ENCODE measurements at regions of chr2 and their contacts with region 1.

Region 1: DNA sequence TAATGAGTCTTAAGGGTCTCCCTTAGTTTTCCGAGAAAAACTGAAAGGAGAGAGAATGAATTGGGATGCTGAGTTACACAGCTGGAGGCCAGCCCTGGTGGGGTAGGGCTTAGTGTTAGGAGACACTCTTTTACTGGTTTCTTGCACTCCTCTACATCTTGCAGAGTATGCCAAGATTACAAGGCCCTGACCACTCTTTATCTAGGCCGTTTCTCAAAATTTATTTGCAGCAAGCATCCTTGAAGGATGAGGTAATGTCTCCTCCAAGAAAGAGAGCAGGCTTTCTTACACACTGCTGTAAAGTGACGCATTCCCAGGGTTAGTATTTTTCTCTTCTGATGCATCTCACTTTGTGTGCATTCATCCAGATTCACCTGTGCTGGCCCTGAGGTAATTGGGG is 166.2 kb downstream of the TDRD15 start:
- DNase-seq: no peak
- ATAC-seq: peak; percentile 66
- H3K4me3 ChIP-seq: no peak overlapping the region
- H3K27ac ChIP-seq: peak overlapping the region; percentile 24 to 38
- H3K4me1 ChIP-seq: peaks cover 3 to 12% of the 10 kb centered on the region in 2 donors
- H3K27me3 ChIP-seq: no peaks in the 10 kb centered on the region

Region 2: DNA sequence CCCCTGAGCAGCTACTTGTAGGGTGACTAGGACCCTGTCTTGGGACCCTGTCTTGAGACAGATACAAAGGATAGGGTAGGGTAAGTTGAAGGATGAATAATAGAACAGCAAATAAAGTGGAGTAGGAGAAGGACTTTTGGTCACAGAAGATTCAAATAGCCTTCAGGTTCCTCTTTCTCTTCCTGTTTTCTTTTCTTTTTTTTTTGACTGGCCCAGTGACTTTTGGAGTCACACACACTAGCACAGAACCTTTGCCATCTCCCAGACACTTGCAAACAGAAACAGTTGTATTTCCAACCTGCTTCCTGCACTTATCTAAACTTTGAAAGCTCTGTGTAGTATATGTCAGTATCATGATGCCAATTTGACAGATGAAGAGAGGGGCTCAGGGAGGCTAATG is 58.0 kb before region 1 on chr2:
- intact Hi-C with region 1: loop called in 1 of 2 experiments (anchors 5 kb)
- DNase-seq: no peak
- ATAC-seq: peak; percentile 16
- H3K4me3 ChIP-seq: no peak overlapping the region
- H3K27ac ChIP-seq: no peak overlapping the region
- H3K4me1 ChIP-seq: peaks cover 0 to 5% of the 10 kb centered on the region in 2 donors
- H3K27me3 ChIP-seq: no peaks in the 10 kb centered on the region

Region 3: GRCh38 chr2:21687589-21687988 is 397.6 kb after region 1 on chr2:
- intact Hi-C with region 1: no loop called
- DNase-seq: no peak
- ATAC-seq: no peak
- H3K4me3 ChIP-seq: no peak overlapping the region
- H3K27ac ChIP-seq: no peak overlapping the region
- H3K4me1 ChIP-seq: no peaks in the 10 kb centered on the region
- H3K27me3 ChIP-seq: no peaks in the 10 kb centered on the region

Measured in aorta (tissue), 5 donors.